ENCODE measurements at regions of chr1 and their contacts with region 1.

Region 1: GRCh38 chr1:40143891-40144575 is 17.2 kb upstream of the RLF start:
- ATAC-seq: peak; percentile 57 to 79 (median 70)
- H3K4me3 ChIP-seq: no peak overlapping the region
- H3K27ac ChIP-seq: no peak overlapping the region
- H3K4me1 ChIP-seq: no peaks in the 10 kb centered on the region

Region 2: GRCh38 chr1:40315239-40315794 is 171.3 kb after region 1 on chr1:
- in situ Hi-C with region 1: loop called in 1 of 9 experiments (anchors 25 kb)
- ATAC-seq: peak; percentile 52 to 93 (median 62)
- H3K4me3 ChIP-seq: peak overlapping the region in 3 of 5 donors; percentile 10 to 12 (median 12)
- H3K27ac ChIP-seq: no peak overlapping the region
- H3K4me1 ChIP-seq: peaks cover 3 to 8% of the 10 kb centered on the region in 2 donors

Region 3: GRCh38 chr1:40338745-40339424 is 194.9 kb after region 1 on chr1:
- in situ Hi-C with region 1: loop called in 4 of 9 experiments (anchors 10 to 25 kb)
- ATAC-seq: peak; percentile 46 to 90 (median 62)
- H3K4me3 ChIP-seq: no peak overlapping the region
- H3K27ac ChIP-seq: no peak overlapping the region
- H3K4me1 ChIP-seq: no peaks in the 10 kb centered on the region

Region 4: DNA sequence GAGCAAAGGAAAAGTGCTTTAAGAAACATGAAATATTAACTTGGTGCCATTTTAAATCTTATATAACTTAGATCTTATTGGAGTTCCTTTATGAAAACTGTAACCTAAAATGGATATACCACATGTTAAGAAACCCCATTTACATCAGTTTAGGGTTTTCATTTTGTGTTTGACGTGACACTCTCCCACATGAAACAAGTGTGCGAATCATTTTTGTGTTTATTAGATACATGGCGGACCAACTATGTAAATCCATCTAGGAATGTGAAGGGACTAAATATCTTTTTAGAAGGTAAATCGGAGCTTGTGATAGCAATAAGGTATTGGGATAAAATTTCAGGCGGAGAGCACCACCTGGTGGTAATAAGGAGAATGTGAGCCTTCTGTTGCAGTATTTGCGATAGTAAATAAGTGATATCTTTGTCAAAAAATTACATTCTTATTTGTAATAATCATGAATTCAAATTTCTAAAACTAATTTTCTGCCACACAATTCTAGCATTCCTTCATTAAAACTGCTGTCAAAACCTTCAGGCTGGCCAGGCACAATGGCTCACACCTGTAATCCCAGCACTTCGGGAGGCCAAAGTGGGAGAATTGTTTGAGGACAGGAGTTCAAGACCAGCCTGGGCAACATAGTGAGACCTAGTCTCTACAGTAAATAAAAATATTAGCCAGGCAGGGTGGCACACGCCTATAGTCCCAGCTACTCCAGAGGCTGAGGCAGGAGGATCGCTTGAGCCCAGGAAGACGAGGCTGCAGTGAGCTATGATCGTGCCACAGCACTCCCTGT is 260.8 kb after region 1 on chr1:
- in situ Hi-C with region 1: loop called in 1 of 9 experiments (anchors 25 kb)
- ATAC-seq: peak in 7 of 8 experiments; percentile 42 to 66 (median 49)
- H3K4me3 ChIP-seq: no peak overlapping the region
- H3K27ac ChIP-seq: no peak overlapping the region
- H3K4me1 ChIP-seq: no peaks in the 10 kb centered on the region

Measured in motor neuron (in vitro differentiated cells).